Right ventricle myocardium inferior (tissue), 1 donor: ENCODE measurements at regions of chr15 and their contacts with region 1.

Region 1: GRCh38 chr15:74906446-74907162 is at the start of gene FAM219B:
- DNase-seq: peak; percentile 98
- ATAC-seq: peak; percentile 94
- total RNA-seq, gene FAM219B: 110 TPM

Region 2: DNA sequence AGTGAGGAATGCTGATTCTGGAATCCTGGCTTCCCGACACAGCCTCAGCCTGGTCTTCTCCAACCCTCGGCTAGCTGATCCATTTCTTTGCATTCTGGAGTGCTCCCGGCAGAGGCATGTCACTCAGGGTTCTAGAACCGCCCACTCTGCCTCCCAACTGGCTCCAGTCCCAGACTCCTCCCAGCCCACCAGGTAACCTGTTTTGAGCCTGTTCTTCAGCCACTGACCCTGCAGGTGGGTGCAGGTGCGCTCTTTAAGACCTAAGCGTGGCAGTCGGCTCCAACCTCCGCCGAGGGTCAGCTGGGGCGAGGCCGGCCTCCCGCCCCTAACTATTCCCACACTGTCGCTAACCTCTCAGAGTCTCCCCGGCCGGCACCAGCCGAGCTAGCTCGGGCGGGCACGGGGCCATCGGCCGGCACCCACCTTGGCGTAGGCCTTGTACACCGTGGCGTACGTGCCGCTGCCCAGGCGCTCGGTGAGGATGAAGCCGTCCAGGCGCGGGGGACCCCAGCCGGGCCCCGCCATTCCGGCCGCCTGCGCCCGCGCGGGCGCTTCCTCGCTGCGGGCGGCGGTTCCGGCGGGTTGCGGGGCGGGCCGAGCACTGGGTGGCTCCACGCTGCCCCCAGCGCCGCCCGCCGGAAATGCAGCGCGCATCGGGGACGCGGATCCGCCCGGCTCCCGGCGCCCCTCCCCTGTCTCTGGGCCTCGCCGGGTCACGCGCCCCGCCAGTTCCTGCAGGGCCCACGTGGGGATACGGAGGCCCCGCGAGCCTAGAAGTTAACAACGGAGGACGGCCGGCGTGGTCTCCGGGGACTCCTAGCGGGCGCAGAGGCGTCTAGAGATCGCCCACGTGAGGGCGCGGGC is 63.8 kb before region 1 on chr15 and contains the start of gene ULK3:
- intact Hi-C with region 1: loop called (anchors 2 kb)
- DNase-seq: peak; percentile 96
- ATAC-seq: peak; percentile 94
- total RNA-seq, gene ULK3: 42.3 TPM

Region 3: GRCh38 chr15:74937596-74938296 is 31.1 kb after region 1 on chr15 and contains the start of gene COX5A:
- intact Hi-C with region 1: loop called (anchors 2 kb)
- DNase-seq: peak; percentile 97
- ATAC-seq: peak; percentile 99
- total RNA-seq, gene COX5A: 1,490 TPM

Region 4: DNA sequence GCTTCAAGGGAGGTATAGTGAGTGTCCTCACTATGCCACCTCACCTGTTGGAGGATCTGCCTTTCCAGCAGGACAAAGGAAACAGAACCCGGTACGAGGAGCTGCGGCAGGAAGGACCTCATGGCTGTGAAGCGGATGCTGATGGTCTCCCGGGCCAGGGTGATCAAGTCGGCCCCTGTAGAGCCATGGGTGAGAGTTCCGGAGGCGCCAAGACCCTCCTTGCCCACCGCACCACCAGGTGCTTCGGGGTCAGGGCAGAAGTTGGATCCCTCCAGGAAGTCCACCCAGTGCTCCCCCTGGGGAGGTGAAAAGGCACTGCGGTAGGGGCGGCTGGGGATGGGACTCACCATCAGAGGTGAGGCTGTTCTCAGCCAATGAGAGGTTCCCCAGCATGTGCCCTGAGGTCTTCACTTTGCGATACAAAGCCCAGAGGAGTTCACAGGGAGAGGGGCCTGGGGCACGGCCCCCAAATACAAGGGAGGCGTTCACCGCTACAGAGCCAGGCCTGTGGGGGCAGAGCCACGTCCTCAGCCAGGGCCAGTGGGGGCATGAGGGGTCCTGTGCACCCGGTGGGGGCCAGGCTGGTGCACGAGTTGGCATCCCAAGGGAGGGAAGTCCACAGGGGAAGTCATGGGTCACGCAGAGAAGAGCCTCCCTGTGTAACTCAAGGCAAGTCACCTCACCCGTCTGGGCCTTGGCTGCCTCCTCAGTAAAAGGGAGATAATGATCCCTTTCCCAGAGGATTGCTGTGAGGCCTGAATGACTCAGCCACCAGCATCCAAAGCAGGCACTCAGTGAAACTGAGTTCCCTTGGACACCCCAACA is 322.8 kb after region 1 on chr15:
- intact Hi-C with region 1: no loop called
- DNase-seq: peak; percentile 40
- ATAC-seq: no peak